HepG2 (cell line): ENCODE measurements at regions of chr9 and their contacts with region 1.

Region 1: GRCh38 chr9:113349445-113350094 is at the start of gene BSPRY:
- DNase-seq: no peak
- ATAC-seq: peak; percentile 54
- H3K4me3 ChIP-seq: peak within 1 kb of the TSS; percentile 26 to 73 (median 42); a peak in 5 of 6 replicates
- H3K27ac ChIP-seq: no peak within 1 kb of the TSS
- H3K4me1 ChIP-seq: peaks cover 45% of the 10 kb centered on the region
- H3K27me3 ChIP-seq: peaks cover 0 to 32% of the 10 kb centered on the region in 2 experiments; a peak in 3 of 5 replicates
- CTCF ChIP-seq: no peak
- EP300 ChIP-seq: no peak
- POLR2A ChIP-seq: no peak
- RAD21 ChIP-seq: no peak
- total RNA-seq, gene BSPRY: 0.09 and 0.13 TPM in 2 replicates

Region 2: GRCh38 chr9:113309204-113309813 is 40.3 kb before region 1 on chr9:
- CTCF ChIA-PET with region 1: no interaction called
- POLR2A ChIA-PET with region 1: no interaction called
- in situ Hi-C with region 1: no loop called
- intact Hi-C with region 1: loop called (anchors 5 kb)
- DNase-seq: peak; percentile 53
- ATAC-seq: peak; percentile 59; the same call in 2 of the 3 replicates
- H3K4me3 ChIP-seq: no peak overlapping the region
- H3K27ac ChIP-seq: no peak overlapping the region
- H3K4me1 ChIP-seq: peaks cover 10% of the 10 kb centered on the region
- H3K27me3 ChIP-seq: 0 out of 5 replicates have a peak, but pooled peaks cover 0 to 1% of the 10 kb centered on the region in 2 experiments
- CTCF ChIP-seq: peak; percentile 72
- EP300 ChIP-seq: no peak
- POLR2A ChIP-seq: no peak
- RAD21 ChIP-seq: peak; percentile 59

Region 3: GRCh38 chr9:113331780-113332179 is 17.8 kb before region 1 on chr9:
- CTCF ChIA-PET with region 1: no interaction called
- POLR2A ChIA-PET with region 1: no interaction called
- in situ Hi-C with region 1: no loop called
- intact Hi-C with region 1: no loop called
- DNase-seq: no peak
- ATAC-seq: no peak
- H3K4me3 ChIP-seq: no peak overlapping the region
- H3K27ac ChIP-seq: no peak overlapping the region
- H3K4me1 ChIP-seq: no peaks in the 10 kb centered on the region
- H3K27me3 ChIP-seq: no peaks in the 10 kb centered on the region
- CTCF ChIP-seq: no peak
- EP300 ChIP-seq: no peak
- POLR2A ChIP-seq: no peak
- RAD21 ChIP-seq: no peak

Region 4: DNA sequence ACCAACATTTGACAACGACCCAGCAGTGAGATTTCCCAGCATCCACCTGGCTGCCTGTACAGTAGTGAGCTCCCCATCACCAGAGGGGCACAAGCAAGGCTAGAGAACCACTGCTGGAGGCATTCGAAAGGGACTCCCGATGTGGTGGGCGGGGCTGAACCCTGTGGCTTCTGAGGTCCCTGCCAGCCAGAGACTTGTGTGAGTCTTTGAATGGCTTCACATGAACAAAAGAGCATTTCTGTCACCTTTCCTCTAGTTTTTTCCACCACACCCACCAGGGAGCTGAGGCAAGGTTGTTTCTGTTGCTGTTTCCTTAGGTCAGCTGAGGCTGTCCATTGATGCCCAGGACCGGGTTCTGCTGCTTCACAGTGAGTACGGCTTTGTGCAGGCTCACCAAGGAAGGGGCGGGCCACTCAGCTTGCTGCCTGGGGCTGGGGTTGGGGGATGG is 129.6 kb after region 1 on chr9:
- CTCF ChIA-PET with region 1: no interaction called
- POLR2A ChIA-PET with region 1: no interaction called
- in situ Hi-C with region 1: no loop called
- intact Hi-C with region 1: no loop called
- DNase-seq: no peak
- ATAC-seq: no peak
- H3K4me3 ChIP-seq: no peak overlapping the region
- H3K27ac ChIP-seq: no peak overlapping the region
- H3K4me1 ChIP-seq: peaks cover 11% of the 10 kb centered on the region
- H3K27me3 ChIP-seq: no peaks in the 10 kb centered on the region
- CTCF ChIP-seq: no peak
- EP300 ChIP-seq: no peak
- POLR2A ChIP-seq: no peak
- RAD21 ChIP-seq: no peak

Region 5: GRCh38 chr9:113564498-113565237 is 215.1 kb after region 1 on chr9:
- CTCF ChIA-PET with region 1: no interaction called
- POLR2A ChIA-PET with region 1: no interaction called
- in situ Hi-C with region 1: no loop called
- intact Hi-C with region 1: no loop called
- DNase-seq: no peak
- ATAC-seq: peak; percentile 13
- H3K4me3 ChIP-seq: peak overlapping the region in 1 of 3 experiments; percentile 49; a peak in 2 of 6 replicates
- H3K27ac ChIP-seq: no peak overlapping the region
- H3K4me1 ChIP-seq: peaks cover 48% of the 10 kb centered on the region
- H3K27me3 ChIP-seq: no peaks in the 10 kb centered on the region
- CTCF ChIP-seq: no peak
- EP300 ChIP-seq: no peak
- POLR2A ChIP-seq: no peak
- RAD21 ChIP-seq: no peak